Activated naive CD4-positive, alpha-beta T cell treated with anti-CD3 and anti-CD28 coated beads for 36 hours (primary cell): ENCODE measurements at regions of chr2 and their contacts with region 1.

Region 1: DNA sequence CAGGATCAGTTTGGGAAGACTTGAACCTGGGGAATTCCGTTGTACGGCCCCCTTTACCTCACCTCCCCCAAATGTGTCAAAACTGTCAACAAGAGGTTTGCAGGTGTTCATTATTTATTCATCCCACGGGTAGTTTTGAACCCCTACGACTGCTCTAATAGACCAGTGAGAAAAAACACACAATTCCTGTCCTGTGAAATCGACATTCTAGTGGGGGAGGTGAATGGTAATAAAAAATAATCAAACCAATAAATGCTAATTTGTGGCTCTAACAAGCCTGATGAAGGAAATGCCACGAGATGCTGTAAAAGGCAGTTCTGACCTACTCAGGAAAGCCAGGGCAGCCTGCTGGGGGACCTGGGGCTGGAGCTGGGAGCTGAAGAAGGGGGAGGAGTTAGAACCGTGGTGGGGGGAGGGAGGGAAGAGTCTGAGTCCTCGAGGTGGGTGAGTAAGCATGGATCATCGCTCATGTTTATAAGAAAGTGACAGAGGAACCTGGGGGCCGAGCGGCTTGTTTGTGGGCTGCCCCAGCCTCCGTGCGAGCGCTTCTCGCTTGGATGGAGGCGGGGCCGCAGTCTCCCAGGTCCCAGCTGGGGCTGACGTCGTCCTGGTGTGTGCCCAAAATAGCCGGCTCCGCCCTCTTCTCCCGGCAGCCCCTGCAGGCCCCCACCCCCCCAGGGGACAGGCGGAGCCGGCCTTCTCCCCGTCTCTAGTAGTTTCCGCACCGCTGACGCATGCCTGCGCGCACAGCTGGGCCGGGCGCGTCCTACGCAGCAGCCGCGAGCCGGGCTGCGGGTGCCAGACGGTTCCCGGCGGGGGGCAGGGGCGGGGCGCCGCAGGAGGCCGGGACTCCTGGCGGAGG is at the start of gene DNAJB2:
- DNase-seq: peak; percentile 99
- H3K4me3 Mint-ChIP-seq: peak within 1 kb of the TSS; percentile 92
- H3K27ac Mint-ChIP-seq: peak within 1 kb of the TSS; percentile 95
- H3K4me1 Mint-ChIP-seq: peaks cover 37% of the 10 kb centered on the region
- H3K27me3 Mint-ChIP-seq: no peaks in the 10 kb centered on the region
- total RNA-seq, gene DNAJB2: 24.6 to 24.9 TPM

Region 2: GRCh38 chr2:218568190-218569037 is 710.5 kb before region 1 on chr2 and contains the starts of genes CNOT9 and USP37:
- CTCF ChIA-PET with region 1: no interaction called
- intact Hi-C with region 1: loop called (anchors 1 kb)
- DNase-seq: peak; percentile 100
- H3K4me3 Mint-ChIP-seq: peak within 1 kb of the TSS; percentile 91
- H3K27ac Mint-ChIP-seq: peak within 1 kb of the TSS; percentile 100
- H3K4me1 Mint-ChIP-seq: peaks cover 60% of the 10 kb centered on the region
- H3K27me3 Mint-ChIP-seq: no peaks in the 10 kb centered on the region
- total RNA-seq, gene CNOT9: 74.3 to 78.6 TPM
- total RNA-seq, gene USP37: 21.7 to 23.2 TPM

Region 3: DNA sequence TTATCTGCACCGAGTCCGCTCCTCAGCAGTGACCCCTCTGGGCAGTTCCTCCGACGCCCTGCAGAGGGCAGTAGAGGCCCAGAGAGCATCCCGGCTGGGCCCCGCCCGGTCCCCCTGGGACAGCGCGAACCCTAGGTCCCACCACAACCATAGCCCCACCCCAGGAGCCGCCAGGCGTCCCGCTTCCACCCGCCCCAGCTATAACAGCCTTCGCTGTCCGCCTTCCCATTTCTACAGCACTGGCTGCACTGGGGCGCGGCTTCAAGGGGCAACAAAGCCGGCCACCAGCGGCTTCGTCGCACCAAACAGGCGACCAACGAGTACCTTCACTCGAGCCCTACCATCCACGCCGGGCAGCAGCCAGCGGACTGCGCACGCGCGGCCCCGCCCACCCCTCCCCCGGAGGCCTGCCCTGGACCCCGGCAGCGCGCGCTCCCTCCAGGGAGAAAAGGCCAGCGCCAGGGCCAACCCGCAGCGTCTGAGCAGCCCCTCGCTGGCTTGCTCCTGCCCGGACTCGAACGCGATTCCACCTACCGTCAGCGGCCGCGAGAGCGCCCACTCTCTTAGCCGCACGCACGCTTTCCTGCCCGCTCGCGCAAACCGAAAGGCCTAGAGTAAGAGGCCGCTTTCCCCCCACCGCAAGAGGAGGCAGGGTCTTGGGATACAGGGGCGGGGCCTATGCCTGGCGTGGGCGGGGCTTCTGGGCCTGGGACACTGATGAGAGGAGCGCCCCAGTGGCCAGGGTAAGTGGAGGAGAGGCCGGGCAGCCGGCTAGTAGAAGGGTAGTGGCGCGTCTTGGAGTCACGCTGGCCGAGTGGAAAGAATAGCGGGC is 118.5 kb before region 1 on chr2 and contains the start of gene NHEJ1:
- CTCF ChIA-PET with region 1: interaction called, 13 read pairs
- intact Hi-C with region 1: loop called (anchors 1 kb)
- DNase-seq: peak; percentile 96
- H3K4me3 Mint-ChIP-seq: peak within 1 kb of the TSS; percentile 80
- H3K27ac Mint-ChIP-seq: peak within 1 kb of the TSS; percentile 88
- H3K4me1 Mint-ChIP-seq: peaks cover 13% of the 10 kb centered on the region
- H3K27me3 Mint-ChIP-seq: no peaks in the 10 kb centered on the region
- total RNA-seq, gene NHEJ1: 24.4 to 26.6 TPM

Region 4: GRCh38 chr2:219218732-219219701 is 59.9 kb before region 1 on chr2 and contains the start of gene ABCB6:
- CTCF ChIA-PET with region 1: no interaction called
- intact Hi-C with region 1: loop called (anchors 1 kb)
- DNase-seq: peak; percentile 89
- H3K4me3 Mint-ChIP-seq: peak within 1 kb of the TSS; percentile 78
- H3K27ac Mint-ChIP-seq: peak within 1 kb of the TSS; percentile 56
- H3K4me1 Mint-ChIP-seq: peaks cover 25% of the 10 kb centered on the region
- H3K27me3 Mint-ChIP-seq: no peaks in the 10 kb centered on the region
- total RNA-seq, gene ABCB6: 7.0 to 7.5 TPM

Region 5: DNA sequence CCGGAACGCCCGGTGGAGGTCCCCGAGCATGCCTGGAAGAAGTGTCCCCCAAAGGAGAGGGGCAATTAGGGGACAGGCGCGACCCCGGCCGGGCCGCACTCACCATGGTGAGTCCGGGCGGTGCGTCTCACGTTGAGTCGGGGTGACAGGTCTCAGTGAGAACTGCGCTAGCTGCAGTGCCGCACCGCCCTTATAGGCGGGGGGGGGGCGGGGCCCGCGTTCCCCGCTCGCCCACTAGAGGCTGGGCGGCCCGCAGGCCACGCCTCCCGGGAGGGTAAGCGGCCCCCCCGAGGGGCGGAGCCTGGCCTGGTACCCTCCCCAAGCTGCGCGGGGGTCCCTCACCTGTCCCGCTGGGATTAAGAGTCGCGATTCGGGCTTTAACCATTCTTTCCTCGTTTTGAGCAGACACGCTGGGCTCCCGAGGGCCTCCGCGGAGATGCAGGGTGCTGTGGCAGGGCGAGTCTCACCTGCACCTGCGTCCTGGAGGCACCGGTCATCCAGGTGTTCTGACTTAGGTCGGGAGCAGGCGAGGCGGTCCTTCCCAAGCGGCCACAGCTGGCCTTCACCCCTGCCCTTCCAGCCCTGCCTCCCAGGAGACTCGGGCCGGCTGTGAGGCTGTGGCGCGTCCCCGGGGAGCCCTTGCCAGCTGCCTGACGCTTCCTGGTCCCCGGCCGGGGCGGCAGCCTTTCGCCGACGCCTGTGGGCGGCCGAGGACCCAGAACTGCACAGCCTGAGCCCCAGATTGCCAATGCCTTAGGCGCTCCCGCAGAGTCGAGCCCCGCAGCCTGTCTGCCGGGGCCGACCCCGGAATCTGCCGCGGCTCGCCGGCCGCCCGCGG is 24.9 kb before region 1 on chr2 and contains the start of gene TUBA4A:
- CTCF ChIA-PET with region 1: interaction called, 21 read pairs
- intact Hi-C with region 1: loop called (anchors 1 kb)
- DNase-seq: peak; percentile 89
- H3K4me3 Mint-ChIP-seq: peak within 1 kb of the TSS; percentile 70
- H3K27ac Mint-ChIP-seq: peak within 1 kb of the TSS; percentile 95
- H3K4me1 Mint-ChIP-seq: peaks cover 49% of the 10 kb centered on the region
- H3K27me3 Mint-ChIP-seq: no peaks in the 10 kb centered on the region
- total RNA-seq, gene TUBA4A: 112 to 116 TPM

Region 6: GRCh38 chr2:219352448-219353023 is 73.7 kb after region 1 on chr2:
- CTCF ChIA-PET with region 1: interaction called, 3 read pairs
- intact Hi-C with region 1: loop called (anchors 1 kb)
- DNase-seq: peak; percentile 86
- H3K4me3 Mint-ChIP-seq: no peak overlapping the region
- H3K27ac Mint-ChIP-seq: no peak overlapping the region
- H3K4me1 Mint-ChIP-seq: no peaks in the 10 kb centered on the region
- H3K27me3 Mint-ChIP-seq: peaks cover 34% of the 10 kb centered on the region

Region 7: DNA sequence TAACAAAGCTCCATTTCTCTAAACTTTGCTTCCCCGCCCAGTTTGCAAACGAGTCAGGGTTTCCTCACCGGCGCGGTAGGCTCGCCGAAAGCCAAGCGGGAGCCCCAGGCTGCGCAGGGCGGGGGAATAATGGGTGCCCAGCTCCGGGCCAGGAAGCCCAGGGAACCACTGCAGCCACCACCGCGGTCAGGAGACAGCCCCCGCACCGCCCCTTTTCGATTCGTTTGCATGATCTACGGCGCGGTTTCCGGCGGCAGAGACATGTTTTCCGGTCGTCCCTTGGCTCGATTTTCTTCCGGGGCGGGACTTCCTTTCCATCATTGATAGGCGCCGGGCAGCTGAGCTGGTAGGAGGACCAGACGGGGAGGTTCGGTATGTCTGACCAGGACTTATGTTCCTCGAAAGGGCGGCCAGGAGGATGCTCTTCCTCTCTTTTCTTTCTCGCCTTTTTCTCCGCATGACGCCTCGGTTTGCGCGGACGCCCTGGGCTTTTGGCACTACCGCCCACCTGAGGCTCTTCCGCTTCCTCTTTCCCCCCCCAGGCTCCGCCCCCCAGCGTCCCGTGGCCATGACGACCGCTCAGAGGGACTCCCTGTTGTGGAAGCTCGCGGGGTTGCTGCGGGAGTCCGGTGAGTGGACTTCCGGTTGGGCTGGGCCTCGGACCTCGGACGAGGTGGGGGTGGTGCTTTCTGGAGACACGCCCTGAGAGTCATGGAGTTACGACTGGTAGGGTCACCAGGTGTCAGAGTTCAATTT is 318.8 kb after region 1 on chr2 and contains the start of gene STK11IP:
- CTCF ChIA-PET with region 1: no interaction called
- intact Hi-C with region 1: loop called (anchors 1 kb)
- DNase-seq: peak; percentile 96
- H3K4me3 Mint-ChIP-seq: peak within 1 kb of the TSS; percentile 94
- H3K27ac Mint-ChIP-seq: peak within 1 kb of the TSS; percentile 94
- H3K4me1 Mint-ChIP-seq: peaks cover 10% of the 10 kb centered on the region
- H3K27me3 Mint-ChIP-seq: no peaks in the 10 kb centered on the region
- total RNA-seq, gene STK11IP: 32.1 TPM